ENCODE measurements at regions of chr22 and their contacts with region 1.

Region 1: DNA sequence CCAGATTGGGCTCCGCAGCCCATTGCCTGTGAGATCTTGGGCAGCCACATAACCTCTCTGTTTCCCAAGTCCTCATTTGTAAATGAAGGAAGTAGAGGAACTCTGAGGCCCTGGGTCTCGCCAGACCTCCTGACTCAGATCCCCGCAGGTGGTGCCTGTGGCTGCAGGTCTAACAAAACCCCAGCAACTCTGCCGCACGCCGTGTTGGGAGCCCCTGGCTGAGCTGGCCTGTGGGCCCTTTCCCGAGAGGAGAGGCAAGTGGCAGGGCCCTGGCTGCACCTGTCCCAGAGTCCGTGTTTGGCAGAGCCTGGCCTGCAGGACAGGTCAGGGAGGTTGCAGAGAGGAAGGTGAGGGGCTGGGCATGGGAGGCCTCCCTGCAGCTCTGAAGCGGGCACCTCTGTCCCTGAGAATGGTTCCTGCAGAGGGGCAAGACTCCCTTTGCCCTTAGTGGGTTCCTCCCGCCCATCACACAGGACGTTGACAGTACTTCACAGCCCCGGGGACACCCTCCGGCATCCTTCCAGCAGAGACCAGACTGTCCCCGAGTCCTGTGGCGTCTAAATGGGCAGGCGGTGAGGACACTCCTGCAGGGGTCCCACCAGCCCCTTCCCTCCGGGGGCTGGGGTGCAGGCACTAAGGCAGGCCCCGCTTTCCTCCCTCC is 67.7 kb downstream of the ARHGAP8 start:
- DNase-seq: no peak
- H3K4me3 ChIP-seq: no peak overlapping the region
- CTCF ChIP-seq: no peak

Region 2: DNA sequence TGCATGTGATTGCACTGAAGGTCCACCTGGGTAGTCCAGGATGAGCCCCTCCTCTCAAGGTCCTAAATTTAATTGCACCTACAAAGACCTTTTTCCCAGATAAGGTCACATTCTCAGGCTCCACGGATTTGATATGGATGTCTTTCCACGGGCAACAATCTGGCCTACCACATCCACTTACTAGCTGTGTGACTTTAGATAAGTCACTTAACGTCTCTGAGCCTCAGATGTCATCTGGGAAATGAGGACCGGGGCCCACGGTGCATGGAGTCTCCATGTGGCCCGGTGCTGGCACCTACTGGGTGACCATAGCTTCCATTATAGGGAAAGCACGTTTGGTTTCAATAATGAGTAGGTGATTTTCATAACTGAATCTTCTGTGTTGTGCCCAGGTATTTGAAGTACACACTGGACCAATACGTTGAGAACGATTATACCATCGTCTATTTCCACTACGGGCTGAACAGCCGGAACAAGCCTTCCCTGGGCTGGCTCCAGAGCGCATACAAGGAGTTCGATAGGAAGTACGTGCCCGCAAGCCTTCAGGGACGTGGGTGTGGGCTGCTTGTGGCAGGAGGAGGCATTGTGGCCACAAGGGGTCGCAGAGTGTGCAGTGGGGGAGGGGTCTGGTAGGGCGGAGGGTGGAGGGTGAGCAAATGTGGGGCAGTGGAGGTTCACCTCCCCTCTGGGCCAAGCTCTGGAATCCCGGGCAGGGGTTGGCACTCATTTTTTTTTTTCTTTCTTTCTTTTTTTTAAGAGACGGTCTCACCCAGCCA is 12.0 kb before region 1 on chr22:
- CTCF ChIA-PET with region 1: interaction called, 15 read pairs
- POLR2A ChIA-PET with region 1: no interaction called
- DNase-seq: no peak
- H3K4me3 ChIP-seq: no peak overlapping the region
- CTCF ChIP-seq: peak; percentile 44

Measured in AG04449 (cell line).